Activated T-helper 2 cell treated with anti-CD3 and anti-CD28 coated beads, Interferon-gamma antibody, Interleukin-2, Interleukin-4, amounts not matched to agents 10 μg/mL and 5 μg/mL and 100 μg/mL, durations not matched to agents 14 hours and 24 hours and 36 hours (primary cell): ENCODE measurements at regions of chr7 and their contacts with region 1.

Region 1: GRCh38 chr7:66075590-66076461 is at the start of gene ASL:
- DNase-seq: peak; percentile 89
- H3K4me3 Mint-ChIP-seq: peak within 1 kb of the TSS; percentile 85
- H3K27ac Mint-ChIP-seq: peak within 1 kb of the TSS; percentile 44
- H3K4me1 Mint-ChIP-seq: peaks cover 14% of the 10 kb centered on the region
- H3K27me3 Mint-ChIP-seq: peaks cover 3% of the 10 kb centered on the region
- total RNA-seq, gene ASL: 48.0 and 49.1 TPM in 2 replicates

Region 2: GRCh38 chr7:65981965-65982792 is 93.6 kb before region 1 on chr7 and contains the start of gene GUSB:
- intact Hi-C with region 1: loop called (anchors 10 kb)
- DNase-seq: peak; percentile 86
- H3K4me3 Mint-ChIP-seq: peak within 1 kb of the TSS; percentile 86
- H3K27ac Mint-ChIP-seq: peak within 1 kb of the TSS; percentile 94
- H3K4me1 Mint-ChIP-seq: peaks cover 7% of the 10 kb centered on the region
- H3K27me3 Mint-ChIP-seq: no peaks in the 10 kb centered on the region
- total RNA-seq, gene GUSB: 62.5 and 68.2 TPM in 2 replicates